HepG2 (cell line): ENCODE measurements at regions of chr14 and their contacts with region 1.

Region 1: DNA sequence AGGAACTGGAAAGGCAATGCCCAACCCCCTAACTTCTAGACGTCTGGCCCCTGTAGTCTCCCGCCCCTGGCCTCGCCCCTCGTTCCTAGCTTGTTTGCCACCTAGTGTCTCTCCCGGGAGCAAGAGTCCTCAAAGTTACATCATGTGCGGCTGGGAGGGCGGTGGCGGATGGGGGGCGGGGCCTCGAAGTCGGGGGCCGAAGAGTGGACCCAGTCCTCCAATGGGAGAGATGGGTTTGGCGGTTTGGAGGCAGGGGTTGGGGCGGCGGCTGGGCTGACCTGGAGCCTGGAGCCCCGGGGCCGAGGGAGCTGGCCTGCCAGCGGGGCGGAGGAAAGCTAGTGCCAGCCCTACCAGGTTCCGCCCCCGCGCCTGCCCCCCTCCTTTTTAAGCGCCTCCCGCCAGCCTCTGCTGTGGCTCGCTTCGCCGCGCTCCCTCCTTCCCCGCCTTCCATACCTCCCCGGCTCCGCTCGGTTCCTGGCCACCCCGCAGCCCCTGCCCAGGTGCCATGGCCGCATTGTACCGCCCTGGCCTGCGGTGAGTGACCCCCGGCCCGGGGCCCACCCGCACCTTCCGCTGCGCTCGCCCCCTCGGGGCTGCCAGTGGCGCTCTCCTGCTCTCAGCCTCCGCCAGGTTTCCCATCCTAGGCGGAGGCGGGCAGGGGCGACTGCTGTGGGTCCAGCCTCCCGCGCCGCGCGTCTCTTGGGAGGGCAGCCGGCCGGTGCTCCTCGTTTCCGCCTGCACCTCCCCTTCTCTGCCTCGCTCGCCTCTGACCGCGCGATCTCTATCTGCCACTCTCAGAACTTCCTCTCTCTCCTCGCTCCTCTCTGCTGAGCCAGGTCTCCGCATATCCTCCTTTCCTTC is at the start of gene PCK2:
- DNase-seq: peak; percentile 99
- ATAC-seq: peak; percentile 86
- H3K4me3 ChIP-seq: peak within 1 kb of the TSS; percentile 86 to 98 (median 97)
- H3K27ac ChIP-seq: peak within 1 kb of the TSS; percentile 87
- H3K4me1 ChIP-seq: peaks cover 62% of the 10 kb centered on the region
- H3K27me3 ChIP-seq: peaks cover 0 to 6% of the 10 kb centered on the region in 2 experiments; a peak in 1 of 5 replicates
- CTCF ChIP-seq: peak; percentile 66
- EP300 ChIP-seq: peak; percentile 23 to 86; a peak in 3 of 4 replicates
- POLR2A ChIP-seq: peak in 1 of 2 experiments; percentile 98; a peak in 2 of 4 replicates
- RAD21 ChIP-seq: peak; percentile 83
- total RNA-seq, gene PCK2: 118 and 129 TPM in 2 replicates

Region 2: GRCh38 chr14:23006544-23007419 is 1087.3 kb before region 1 on chr14:
- CTCF ChIA-PET with region 1: no interaction called
- POLR2A ChIA-PET with region 1: interaction called, 13 read pairs
- in situ Hi-C with region 1: no loop called
- intact Hi-C with region 1: no loop called
- DNase-seq: peak; percentile 100
- ATAC-seq: peak; percentile 97
- H3K4me3 ChIP-seq: peak overlapping the region; percentile 68 to 82 (median 80)
- H3K27ac ChIP-seq: peak overlapping the region; percentile 86
- H3K4me1 ChIP-seq: peaks cover 52% of the 10 kb centered on the region
- H3K27me3 ChIP-seq: no peaks in the 10 kb centered on the region; a peak in 1 of 5 replicates
- CTCF ChIP-seq: peak; percentile 76
- EP300 ChIP-seq: peak in 1 of 2 experiments; percentile 9; a peak in 3 of 4 replicates
- POLR2A ChIP-seq: peak; percentile 96 to 98
- RAD21 ChIP-seq: peak; percentile 91

Region 3: GRCh38 chr14:23421594-23421993 is 672.5 kb before region 1 on chr14:
- CTCF ChIA-PET with region 1: no interaction called
- POLR2A ChIA-PET with region 1: no interaction called
- in situ Hi-C with region 1: no loop called
- intact Hi-C with region 1: no loop called
- DNase-seq: no peak
- ATAC-seq: no peak
- H3K4me3 ChIP-seq: no peak overlapping the region
- H3K27ac ChIP-seq: no peak overlapping the region
- H3K4me1 ChIP-seq: no peaks in the 10 kb centered on the region
- H3K27me3 ChIP-seq: peaks cover 9 to 69% of the 10 kb centered on the region in 2 experiments
- CTCF ChIP-seq: no peak
- EP300 ChIP-seq: no peak
- POLR2A ChIP-seq: no peak
- RAD21 ChIP-seq: no peak

Region 4: DNA sequence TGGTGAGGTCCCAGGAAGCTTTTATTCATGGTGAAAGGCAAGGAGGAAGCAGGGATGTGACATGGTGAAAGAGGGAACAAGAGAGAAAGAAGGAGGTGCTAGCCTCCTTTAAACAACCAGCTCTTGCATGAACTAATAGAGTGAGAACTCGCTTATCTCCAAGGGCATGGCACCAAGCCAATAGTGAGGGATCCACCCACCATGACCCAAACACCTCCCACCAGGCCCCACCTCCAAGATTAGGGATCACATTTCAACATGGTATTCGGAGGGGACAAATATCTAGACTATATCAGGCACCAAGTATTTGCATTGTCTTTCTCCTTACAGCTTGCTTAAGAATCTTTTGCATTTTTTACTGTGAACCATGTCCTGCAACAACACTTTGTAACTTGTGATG is 232.5 kb before region 1 on chr14:
- CTCF ChIA-PET with region 1: no interaction called
- POLR2A ChIA-PET with region 1: no interaction called
- in situ Hi-C with region 1: no loop called
- intact Hi-C with region 1: no loop called
- DNase-seq: peak; percentile 46
- ATAC-seq: peak; percentile 29; the same call in 2 of the 3 replicates
- H3K4me3 ChIP-seq: no peak overlapping the region
- H3K27ac ChIP-seq: no peak overlapping the region
- H3K4me1 ChIP-seq: no peaks in the 10 kb centered on the region; the same call in 1 of the 2 replicates
- H3K27me3 ChIP-seq: peaks cover 0 to 13% of the 10 kb centered on the region in 2 experiments; a peak in 2 of 5 replicates
- CTCF ChIP-seq: no peak
- EP300 ChIP-seq: no peak
- POLR2A ChIP-seq: no peak
- RAD21 ChIP-seq: no peak

Region 5: GRCh38 chr14:23953464-23954278 is 140.5 kb before region 1 on chr14 and contains the start of gene DHRS4:
- CTCF ChIA-PET with region 1: no interaction called
- POLR2A ChIA-PET with region 1: interaction called, 20 read pairs
- in situ Hi-C with region 1: no loop called
- intact Hi-C with region 1: no loop called
- DNase-seq: peak; percentile 94
- ATAC-seq: peak; percentile 98
- H3K4me3 ChIP-seq: peak within 1 kb of the TSS; percentile 73 to 90 (median 85)
- H3K27ac ChIP-seq: peak within 1 kb of the TSS; percentile 74
- H3K4me1 ChIP-seq: peaks cover 27% of the 10 kb centered on the region
- H3K27me3 ChIP-seq: no peaks in the 10 kb centered on the region
- CTCF ChIP-seq: peak; percentile 100
- EP300 ChIP-seq: peak; percentile 6 to 60; a peak in 3 of 4 replicates
- POLR2A ChIP-seq: peak; percentile 97 to 99
- RAD21 ChIP-seq: peak; percentile 93
- total RNA-seq, gene DHRS4: 45.1 and 49.4 TPM in 2 replicates

Region 6: DNA sequence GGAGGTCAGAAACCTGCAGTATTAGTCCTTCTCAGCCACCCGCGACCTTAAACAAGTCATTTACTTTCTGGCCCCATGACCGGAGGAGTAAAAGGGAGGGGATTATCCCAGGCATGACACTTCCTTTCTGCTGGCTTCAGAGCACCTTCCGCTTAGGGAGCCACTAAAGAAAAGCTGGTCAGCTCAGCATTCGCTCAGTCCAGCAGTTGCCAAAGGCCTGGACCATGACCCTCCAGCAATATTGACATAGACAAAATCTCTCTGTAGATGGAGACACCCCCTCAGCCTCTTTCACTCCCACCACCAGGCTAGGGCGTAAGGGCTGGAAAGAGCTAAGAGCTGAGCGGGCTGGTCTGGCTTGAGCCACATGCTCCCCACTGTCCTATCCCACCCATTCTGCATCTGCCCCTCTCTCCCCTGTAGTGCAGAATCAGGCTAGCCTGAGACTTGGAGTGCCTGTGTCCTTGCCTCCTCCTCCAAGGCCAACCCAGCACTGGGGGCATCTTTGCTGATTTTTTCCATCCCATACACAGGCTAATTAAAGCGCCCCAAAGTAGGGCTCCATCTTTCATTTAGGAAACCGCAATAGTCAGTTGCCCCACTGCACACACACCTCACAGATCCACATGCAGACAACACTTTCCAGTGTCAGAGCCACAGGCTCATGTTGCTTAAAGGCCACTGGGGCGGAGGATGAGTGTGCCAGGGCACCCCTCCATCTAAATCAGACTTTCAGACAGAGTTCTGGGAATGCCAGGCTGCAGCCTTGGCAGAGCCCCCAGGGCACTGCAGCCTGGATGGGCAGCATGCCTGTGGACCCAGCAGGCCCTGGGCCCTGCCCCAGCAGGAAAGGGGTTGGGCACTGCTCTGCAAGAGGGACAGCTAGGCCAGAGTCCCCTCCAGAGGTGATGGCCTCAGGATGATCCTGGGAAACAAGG is 26.7 kb before region 1 on chr14:
- CTCF ChIA-PET with region 1: interaction called, 4 read pairs
- POLR2A ChIA-PET with region 1: interaction called, 226 read pairs
- in situ Hi-C with region 1: no loop called
- intact Hi-C with region 1: no loop called
- DNase-seq: peak; percentile 72
- ATAC-seq: peak; percentile 78
- H3K4me3 ChIP-seq: peak overlapping the region in 2 of 3 experiments; percentile 6 to 49; a peak in 4 of 6 replicates
- H3K27ac ChIP-seq: peak overlapping the region; percentile 3
- H3K4me1 ChIP-seq: peaks cover 33% of the 10 kb centered on the region
- H3K27me3 ChIP-seq: peaks cover 11 to 49% of the 10 kb centered on the region in 2 experiments; a peak in 3 of 5 replicates
- CTCF ChIP-seq: peak; percentile 44
- EP300 ChIP-seq: peak in 1 of 2 experiments; percentile 25; a peak in 1 of 4 replicates
- POLR2A ChIP-seq: no peak
- RAD21 ChIP-seq: no peak

Region 7: DNA sequence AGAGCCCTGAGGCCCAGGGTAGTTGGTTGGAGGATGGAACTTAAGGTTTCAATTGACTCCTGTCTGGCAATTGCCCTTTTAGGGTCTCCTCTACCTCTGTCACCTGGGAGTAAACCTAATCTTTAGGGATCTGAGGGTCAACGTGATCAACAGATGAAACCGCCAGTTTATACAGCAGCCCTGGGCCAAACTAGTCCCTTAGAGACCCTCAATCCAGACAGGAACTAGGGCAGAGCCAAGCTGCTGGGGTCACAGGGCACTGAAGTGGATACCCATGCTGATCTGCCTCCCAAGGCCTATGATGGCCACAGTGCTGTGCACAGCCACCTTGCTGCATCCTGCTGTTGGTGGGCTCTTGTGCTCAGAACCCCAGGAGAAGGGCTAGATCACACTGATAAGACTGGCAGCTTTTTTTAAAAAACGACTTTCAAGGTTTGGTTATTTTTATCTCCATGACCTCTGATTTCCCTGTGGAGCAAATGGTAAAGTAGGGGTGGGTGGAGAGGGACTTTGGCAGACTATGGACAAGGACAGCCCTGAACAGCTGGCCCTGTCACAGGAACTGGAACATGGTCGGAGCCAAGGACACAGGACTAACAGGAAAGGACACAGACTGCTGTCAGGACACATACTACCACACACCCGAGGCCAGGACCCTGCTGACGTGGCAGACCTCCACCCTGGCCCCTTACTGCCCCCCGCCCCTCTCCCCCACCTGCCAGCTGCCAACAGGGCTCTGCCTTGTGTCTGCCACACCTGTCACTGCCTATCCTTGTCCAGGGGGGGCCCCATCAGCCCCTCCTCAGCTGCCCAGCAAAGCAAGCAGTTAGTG is 36.8 kb after region 1 on chr14:
- CTCF ChIA-PET with region 1: no interaction called
- POLR2A ChIA-PET with region 1: interaction called, 258 read pairs
- in situ Hi-C with region 1: no loop called
- intact Hi-C with region 1: no loop called
- DNase-seq: peak; percentile 81
- ATAC-seq: peak; percentile 55
- H3K4me3 ChIP-seq: peak overlapping the region in 1 of 3 experiments; percentile 2; a peak in 1 of 6 replicates
- H3K27ac ChIP-seq: peak overlapping the region; percentile 48
- H3K4me1 ChIP-seq: peaks cover 52% of the 10 kb centered on the region
- H3K27me3 ChIP-seq: no peaks in the 10 kb centered on the region; a peak in 1 of 5 replicates
- CTCF ChIP-seq: no peak
- EP300 ChIP-seq: peak in 1 of 2 experiments; percentile 36; a peak in 1 of 4 replicates
- POLR2A ChIP-seq: no peak
- RAD21 ChIP-seq: no peak

Region 8: DNA sequence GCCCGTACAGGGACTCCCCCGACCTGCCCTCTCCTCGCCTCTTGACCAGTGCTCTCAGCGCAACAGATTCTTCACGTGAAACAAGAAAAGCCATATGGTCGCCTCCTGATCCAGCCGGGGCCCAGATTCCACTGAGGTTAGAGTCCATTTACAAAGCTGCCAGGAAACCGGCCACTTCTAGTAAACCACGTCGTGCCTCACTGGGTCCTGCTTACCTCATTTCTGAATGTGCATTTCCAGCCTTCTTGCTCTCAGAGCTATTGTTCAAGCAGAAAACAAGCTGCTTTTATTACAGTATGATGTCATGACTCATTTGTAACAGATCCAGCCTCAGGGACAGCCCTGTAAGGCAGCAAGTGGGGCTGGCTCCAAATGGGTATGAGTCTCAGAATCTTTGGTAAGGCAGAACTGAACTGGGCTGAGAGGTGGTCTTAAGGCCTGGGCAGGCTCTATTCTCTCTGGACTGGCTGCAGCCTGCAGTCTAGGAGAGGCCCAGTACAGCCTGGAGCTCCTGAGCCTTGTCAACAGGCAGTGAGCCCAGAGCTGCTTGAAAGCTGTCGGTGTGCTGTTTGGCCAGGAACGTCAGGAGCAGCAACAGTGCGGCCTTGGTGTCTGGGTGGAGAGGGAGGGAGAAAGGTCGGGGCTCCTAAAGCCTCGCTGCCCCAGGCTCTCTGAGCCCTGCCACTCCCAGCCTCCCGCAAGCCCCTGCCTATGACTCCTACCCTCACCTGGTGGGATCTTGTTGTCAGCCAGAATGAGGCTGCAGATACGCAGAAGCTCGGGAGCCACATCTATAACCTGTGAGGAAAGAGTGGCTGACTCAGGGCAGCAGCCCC is 86.0 kb after region 1 on chr14:
- CTCF ChIA-PET with region 1: no interaction called
- POLR2A ChIA-PET with region 1: interaction called, 14 read pairs
- in situ Hi-C with region 1: no loop called
- intact Hi-C with region 1: no loop called
- DNase-seq: no peak
- ATAC-seq: no peak
- H3K4me3 ChIP-seq: no peak overlapping the region
- H3K27ac ChIP-seq: no peak overlapping the region
- H3K4me1 ChIP-seq: no peaks in the 10 kb centered on the region
- H3K27me3 ChIP-seq: no peaks in the 10 kb centered on the region
- CTCF ChIP-seq: no peak
- EP300 ChIP-seq: no peak
- POLR2A ChIP-seq: no peak
- RAD21 ChIP-seq: no peak

Region 9: DNA sequence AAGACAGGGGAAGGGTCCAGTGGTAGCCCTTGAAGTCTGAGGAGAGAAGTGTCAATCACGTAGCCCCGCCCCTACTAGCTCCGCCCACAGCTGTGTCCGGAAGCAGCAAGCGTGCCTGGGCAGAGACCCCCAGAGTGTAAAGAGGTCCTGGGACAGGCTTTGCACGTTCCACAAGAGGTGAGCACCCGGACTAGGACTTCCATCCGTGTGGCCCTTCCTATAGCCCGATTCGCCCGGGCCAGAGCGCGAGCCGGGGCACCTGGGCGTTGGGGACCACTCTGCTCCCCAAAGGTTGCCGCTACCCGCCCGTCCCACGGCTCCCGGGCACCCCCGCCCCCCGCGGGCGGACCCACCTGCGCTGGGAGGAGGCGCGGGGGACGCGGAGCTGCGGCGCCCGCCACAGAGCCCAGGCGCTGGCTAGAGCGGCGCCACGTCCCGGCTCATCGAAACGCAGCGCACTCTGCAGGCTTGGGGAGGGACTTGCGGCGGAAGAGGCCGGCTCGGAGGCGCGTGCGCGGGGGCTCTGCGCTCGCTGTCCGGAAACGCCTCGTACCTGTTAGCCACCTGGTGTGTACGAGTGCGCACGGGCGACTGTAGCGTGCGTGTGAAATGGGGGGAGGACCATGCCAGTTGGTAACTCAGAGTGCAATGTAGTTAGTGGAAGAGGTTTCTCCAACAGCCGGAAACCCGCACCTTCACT is 177.2 kb after region 1 on chr14 and contains the start of gene RABGGTA:
- CTCF ChIA-PET with region 1: no interaction called
- POLR2A ChIA-PET with region 1: interaction called, 40 read pairs
- in situ Hi-C with region 1: no loop called
- intact Hi-C with region 1: no loop called
- DNase-seq: peak; percentile 96
- ATAC-seq: peak; percentile 95
- H3K4me3 ChIP-seq: peak within 1 kb of the TSS; percentile 78 to 96 (median 78)
- H3K27ac ChIP-seq: peak within 1 kb of the TSS; percentile 92
- H3K4me1 ChIP-seq: peaks cover 22% of the 10 kb centered on the region
- H3K27me3 ChIP-seq: no peaks in the 10 kb centered on the region; a peak in 1 of 5 replicates
- CTCF ChIP-seq: peak; percentile 99
- EP300 ChIP-seq: peak; percentile 76 to 86; a peak in 3 of 4 replicates
- POLR2A ChIP-seq: peak in 1 of 2 experiments; percentile 96; a peak in 2 of 4 replicates
- RAD21 ChIP-seq: peak; percentile 91
- total RNA-seq, gene RABGGTA: 31.2 and 57.9 TPM in 2 replicates